ENCODE measurements at regions of chr7 and their contacts with region 1.

Region 1: GRCh38 chr7:47435889-47436312 is 146.0 kb downstream of the TNS3 start:
- DNase-seq: peak; percentile 72
- ATAC-seq: peak; percentile 84 to 90

Region 2: GRCh38 chr7:46960970-46961369 is 474.9 kb before region 1 on chr7:
- intact Hi-C with region 1: no loop called
- DNase-seq: no peak
- ATAC-seq: no peak

Region 3: GRCh38 chr7:47470567-47471359 is 34.9 kb after region 1 on chr7:
- intact Hi-C with region 1: no loop called
- DNase-seq: no peak
- ATAC-seq: no peak

Region 4: DNA sequence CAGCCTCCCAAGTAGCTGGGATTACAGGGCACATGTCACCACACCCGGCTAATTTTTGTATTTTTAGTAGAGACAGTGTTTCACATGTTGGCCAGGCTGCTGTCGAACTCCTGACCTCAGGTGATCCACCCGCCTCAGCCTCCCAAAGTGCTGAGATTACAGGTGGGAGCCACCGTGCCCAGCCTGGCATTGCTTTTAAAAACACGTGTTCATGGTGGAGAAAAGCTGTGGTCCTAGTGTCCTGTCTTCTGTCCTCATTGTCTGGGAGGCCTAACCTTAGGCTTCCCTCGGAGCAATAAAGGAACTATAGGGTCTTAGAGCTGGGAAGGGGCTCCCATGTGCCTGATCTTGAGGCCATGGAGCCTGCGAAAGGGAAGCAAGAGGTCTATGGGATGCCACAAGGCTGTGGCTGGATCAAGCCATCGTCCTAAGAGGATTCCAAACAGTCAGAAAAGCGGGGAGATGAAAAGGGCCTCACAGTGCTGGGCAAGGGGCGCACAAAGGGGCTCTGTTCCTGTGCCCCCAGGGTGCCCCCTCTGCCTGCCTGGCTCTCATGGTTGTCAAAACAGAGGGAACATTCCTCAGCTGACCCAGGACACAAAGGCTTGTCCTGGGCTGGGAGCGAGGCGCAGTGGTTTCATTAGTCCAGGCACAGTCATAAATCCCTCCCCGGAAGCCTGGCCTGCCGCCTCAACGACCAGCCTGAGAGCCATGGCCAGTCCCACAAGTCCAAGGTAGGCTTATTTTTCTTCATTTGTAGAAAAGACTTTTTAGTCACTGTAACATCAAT is 252.6 kb after region 1 on chr7:
- intact Hi-C with region 1: loop called in 1 of 2 experiments (anchors 10 kb)
- DNase-seq: no peak
- ATAC-seq: peak in 1 of 2 donors; percentile 24

Region 5: GRCh38 chr7:47979145-47979831 is 543.4 kb after region 1 on chr7 and contains the start of gene HUS1:
- intact Hi-C with region 1: no loop called
- DNase-seq: peak; percentile 94
- ATAC-seq: peak; percentile 99
- total RNA-seq, gene HUS1: 27.2 to 28.4 TPM